ENCODE measurements at regions of chr17 and their contacts with region 1.

Region 1: GRCh38 chr17:58577642-58578091 is 63.2 kb upstream of the MTMR4 start:
- DNase-seq: peak in 1 of 2 experiments; percentile 67
- H3K4me3 ChIP-seq: no peak overlapping the region
- H3K27ac ChIP-seq: no peak overlapping the region
- H3K4me1 ChIP-seq: no peaks in the 10 kb centered on the region
- H3K27me3 ChIP-seq: no peaks in the 10 kb centered on the region
- CTCF ChIP-seq: peak in 2 of 3 experiments; percentile 63 to 69; a peak in 3 of 4 replicates
- EP300 ChIP-seq: no peak
- POLR2A ChIP-seq: no peak
- RAD21 ChIP-seq: peak; percentile 46 to 55; a peak in 3 of 4 replicates

Region 2: GRCh38 chr17:58463821-58464220 is 113.8 kb before region 1 on chr17:
- CTCF ChIA-PET with region 1: no interaction called
- POLR2A ChIA-PET with region 1: no interaction called
- DNase-seq: no peak
- H3K4me3 ChIP-seq: no peak overlapping the region
- H3K27ac ChIP-seq: no peak overlapping the region
- H3K4me1 ChIP-seq: no peaks in the 10 kb centered on the region
- H3K27me3 ChIP-seq: no peaks in the 10 kb centered on the region
- CTCF ChIP-seq: no peak
- EP300 ChIP-seq: no peak
- POLR2A ChIP-seq: no peak
- RAD21 ChIP-seq: no peak

Region 3: DNA sequence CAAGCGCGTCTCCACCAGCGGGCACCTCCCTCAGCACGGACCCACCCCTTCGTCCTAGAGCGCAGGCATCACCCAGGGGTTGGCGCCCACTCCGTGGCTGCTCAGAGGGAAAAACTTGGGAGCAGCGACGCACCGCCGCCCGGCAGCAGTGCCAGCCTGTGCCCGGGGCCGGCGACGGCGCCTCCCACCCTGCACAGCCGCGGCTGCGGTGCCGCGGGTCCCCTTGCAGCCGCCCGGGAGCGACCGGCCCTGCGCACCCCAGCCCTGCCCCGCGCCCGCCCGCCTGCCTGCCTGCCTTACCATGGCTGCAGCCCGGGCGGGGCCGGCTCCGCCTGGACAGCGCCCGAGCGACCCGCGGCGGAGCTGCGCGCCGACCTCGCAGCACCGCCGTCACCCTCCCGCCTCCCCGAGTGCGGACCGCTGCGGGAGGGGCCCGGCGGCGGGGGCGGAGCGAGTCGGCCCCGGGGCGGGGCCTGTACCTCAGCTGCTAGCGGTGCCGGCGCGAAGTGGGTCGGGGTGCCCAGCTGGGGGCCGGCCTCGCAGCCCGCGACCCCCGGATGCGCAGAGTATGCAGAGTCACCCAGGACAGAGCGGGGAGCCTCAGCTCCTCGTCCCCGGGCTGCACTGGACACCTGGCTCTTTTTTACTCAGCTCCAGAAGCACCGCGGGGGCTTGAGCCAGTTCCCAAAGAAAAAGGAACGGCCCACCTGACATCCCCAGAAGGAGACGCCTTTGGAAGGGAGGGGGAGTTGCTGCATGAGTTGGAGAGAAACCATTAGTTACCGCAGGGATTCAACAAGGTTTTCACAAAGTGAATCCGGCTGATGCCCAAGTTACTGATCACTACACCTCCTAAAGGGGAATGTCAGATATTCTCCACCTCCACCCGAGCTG is 45.8 kb before region 1 on chr17:
- CTCF ChIA-PET with region 1: interaction called, 37 read pairs
- POLR2A ChIA-PET with region 1: no interaction called
- DNase-seq: peak in 1 of 2 experiments; percentile 87
- H3K4me3 ChIP-seq: peak overlapping the region; percentile 67 to 90 (median 72)
- H3K27ac ChIP-seq: no peak overlapping the region
- H3K4me1 ChIP-seq: peaks cover 7 to 15% (median 9%) of the 10 kb centered on the region in 4 experiments
- H3K27me3 ChIP-seq: peaks cover 0 to 6% (median 4%) of the 10 kb centered on the region in 4 experiments; a peak in 5 of 7 replicates
- CTCF ChIP-seq: no peak
- EP300 ChIP-seq: no peak
- POLR2A ChIP-seq: no peak
- RAD21 ChIP-seq: no peak

Region 4: GRCh38 chr17:58556833-58557250 is 20.8 kb before region 1 on chr17:
- CTCF ChIA-PET with region 1: interaction called, 24 read pairs
- POLR2A ChIA-PET with region 1: no interaction called
- DNase-seq: no peak
- H3K4me3 ChIP-seq: no peak overlapping the region
- H3K27ac ChIP-seq: no peak overlapping the region
- H3K4me1 ChIP-seq: no peaks in the 10 kb centered on the region
- H3K27me3 ChIP-seq: no peaks in the 10 kb centered on the region
- CTCF ChIP-seq: no peak
- EP300 ChIP-seq: no peak
- POLR2A ChIP-seq: no peak
- RAD21 ChIP-seq: no peak

Region 5: DNA sequence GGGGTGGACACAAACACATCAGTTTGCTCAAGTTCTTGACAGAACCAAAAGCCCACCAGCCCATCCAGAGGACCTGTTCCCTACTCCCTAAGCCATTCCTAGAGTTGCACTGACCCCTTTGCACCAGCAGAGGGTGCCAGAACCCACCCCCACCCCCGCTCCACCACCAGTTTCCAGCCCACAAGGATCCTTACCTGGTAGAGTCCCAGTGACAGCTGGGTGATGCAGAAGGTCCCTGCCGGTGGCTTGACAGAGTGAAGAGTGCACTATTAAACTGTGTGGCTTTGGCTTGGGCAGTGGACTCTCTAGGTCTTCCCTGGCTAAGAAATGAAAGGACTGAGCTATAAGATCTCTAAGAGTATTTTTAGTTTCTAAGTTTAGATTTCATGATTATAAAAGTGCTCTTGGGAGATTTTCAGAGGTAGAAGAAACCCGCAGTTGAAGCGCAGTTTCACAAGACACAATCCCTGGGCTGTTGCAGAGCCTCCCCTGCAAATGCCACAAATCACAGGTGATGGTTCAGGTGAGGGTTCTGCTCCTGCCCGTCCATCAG is 10.1 kb after region 1 on chr17:
- CTCF ChIA-PET with region 1: interaction called, 42 read pairs
- POLR2A ChIA-PET with region 1: no interaction called
- DNase-seq: peak; percentile 46 to 70
- H3K4me3 ChIP-seq: no peak overlapping the region
- H3K27ac ChIP-seq: no peak overlapping the region
- H3K4me1 ChIP-seq: no peaks in the 10 kb centered on the region
- H3K27me3 ChIP-seq: no peaks in the 10 kb centered on the region
- CTCF ChIP-seq: peak; percentile 91 to 96 (median 91)
- EP300 ChIP-seq: no peak
- POLR2A ChIP-seq: no peak
- RAD21 ChIP-seq: peak; percentile 92 to 94

Region 6: DNA sequence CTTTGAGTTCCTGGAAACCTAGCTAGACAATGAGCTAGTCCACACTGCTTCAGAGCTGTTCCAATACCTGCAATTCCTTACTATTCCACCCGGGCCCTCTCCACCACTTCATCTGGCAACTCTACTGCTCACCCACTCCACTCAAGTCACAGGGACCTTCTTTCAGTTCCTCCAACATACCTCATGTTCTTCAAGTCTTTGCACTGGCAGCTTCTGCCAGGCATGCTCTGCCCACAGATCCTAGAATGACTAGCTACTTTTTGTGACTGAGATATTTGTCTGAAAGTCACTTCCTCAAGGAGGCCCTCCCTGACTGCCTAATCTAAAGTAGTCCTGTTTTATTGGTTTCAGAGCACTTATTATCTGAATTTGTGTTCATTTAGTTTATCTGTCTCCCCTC is 27.8 kb after region 1 on chr17:
- CTCF ChIA-PET with region 1: interaction called, 10 read pairs
- POLR2A ChIA-PET with region 1: no interaction called
- DNase-seq: no peak
- H3K4me3 ChIP-seq: no peak overlapping the region
- H3K27ac ChIP-seq: no peak overlapping the region
- H3K4me1 ChIP-seq: peaks cover 0 to 9% (median 2%) of the 10 kb centered on the region in 4 experiments; a peak in 3 of 7 replicates
- H3K27me3 ChIP-seq: no peaks in the 10 kb centered on the region
- CTCF ChIP-seq: no peak
- EP300 ChIP-seq: no peak
- POLR2A ChIP-seq: no peak
- RAD21 ChIP-seq: no peak

Measured in H1 (cell line).